Ovary (tissue), 10 donors: ENCODE measurements at regions of chr7 and their contacts with region 1.

Region 1: DNA sequence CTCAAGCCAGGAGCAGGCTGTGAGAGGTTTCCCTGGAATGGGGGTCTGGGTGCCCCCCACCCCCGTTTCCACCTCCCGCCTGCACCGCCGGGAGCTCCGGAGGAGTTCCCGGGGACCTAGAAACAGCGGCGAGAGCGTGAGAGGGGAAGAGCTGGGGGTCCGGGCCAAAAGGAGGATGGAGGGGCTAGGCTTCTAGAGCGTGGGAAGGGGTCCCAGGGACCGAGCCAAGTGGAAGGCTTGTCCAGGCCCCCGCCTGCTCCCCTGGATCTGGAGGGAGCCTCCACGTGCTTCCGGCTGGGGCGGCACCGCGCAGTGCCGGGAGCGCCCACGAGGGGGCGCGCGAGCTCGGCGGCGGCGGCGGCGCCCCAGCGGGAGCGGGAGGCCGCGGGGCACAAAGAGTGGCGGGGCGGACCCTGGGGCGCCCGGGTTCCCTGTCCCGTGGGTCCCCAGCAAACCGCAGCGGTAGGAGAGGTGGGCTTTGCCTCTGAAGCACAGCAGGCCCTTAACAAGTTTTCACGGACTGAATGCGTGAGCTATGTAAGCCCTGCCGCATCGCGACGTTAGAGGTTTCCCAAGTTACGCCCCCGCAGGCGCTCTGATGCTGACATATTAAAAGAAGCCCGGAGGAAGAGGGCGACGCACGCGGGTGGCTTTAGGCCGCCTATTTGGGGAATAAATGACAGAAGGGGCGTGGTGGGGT is 104.4 kb upstream of the LRRC4 start:
- DNase-seq: peak; percentile 22 to 72 (median 46)
- H3K4me3 ChIP-seq: peak overlapping the region; percentile 42
- H3K27ac ChIP-seq: no peak overlapping the region
- H3K4me1 ChIP-seq: peaks cover 8% of the 10 kb centered on the region
- H3K27me3 ChIP-seq: no peaks in the 10 kb centered on the region
- CTCF ChIP-seq: peak; percentile 63 to 83 (median 80)
- EP300 ChIP-seq: no peak
- POLR2A ChIP-seq: no peak

Region 2: GRCh38 chr7:128115391-128116332 is 20.0 kb before region 1 on chr7:
- intact Hi-C with region 1: no loop called
- DNase-seq: no peak
- H3K4me3 ChIP-seq: no peak overlapping the region
- H3K27ac ChIP-seq: no peak overlapping the region
- H3K4me1 ChIP-seq: no peaks in the 10 kb centered on the region
- H3K27me3 ChIP-seq: no peaks in the 10 kb centered on the region
- CTCF ChIP-seq: no peak
- EP300 ChIP-seq: no peak
- POLR2A ChIP-seq: no peak

Region 3: GRCh38 chr7:128322040-128322643 is 186.5 kb after region 1 on chr7:
- intact Hi-C with region 1: loop called in 1 of 4 experiments (anchors 5 kb)
- DNase-seq: no peak
- H3K4me3 ChIP-seq: no peak overlapping the region
- H3K27ac ChIP-seq: no peak overlapping the region
- H3K4me1 ChIP-seq: no peaks in the 10 kb centered on the region
- H3K27me3 ChIP-seq: no peaks in the 10 kb centered on the region
- CTCF ChIP-seq: no peak
- EP300 ChIP-seq: no peak
- POLR2A ChIP-seq: no peak